ENCODE measurements at regions of chr1 and their contacts with region 1.

Region 1: DNA sequence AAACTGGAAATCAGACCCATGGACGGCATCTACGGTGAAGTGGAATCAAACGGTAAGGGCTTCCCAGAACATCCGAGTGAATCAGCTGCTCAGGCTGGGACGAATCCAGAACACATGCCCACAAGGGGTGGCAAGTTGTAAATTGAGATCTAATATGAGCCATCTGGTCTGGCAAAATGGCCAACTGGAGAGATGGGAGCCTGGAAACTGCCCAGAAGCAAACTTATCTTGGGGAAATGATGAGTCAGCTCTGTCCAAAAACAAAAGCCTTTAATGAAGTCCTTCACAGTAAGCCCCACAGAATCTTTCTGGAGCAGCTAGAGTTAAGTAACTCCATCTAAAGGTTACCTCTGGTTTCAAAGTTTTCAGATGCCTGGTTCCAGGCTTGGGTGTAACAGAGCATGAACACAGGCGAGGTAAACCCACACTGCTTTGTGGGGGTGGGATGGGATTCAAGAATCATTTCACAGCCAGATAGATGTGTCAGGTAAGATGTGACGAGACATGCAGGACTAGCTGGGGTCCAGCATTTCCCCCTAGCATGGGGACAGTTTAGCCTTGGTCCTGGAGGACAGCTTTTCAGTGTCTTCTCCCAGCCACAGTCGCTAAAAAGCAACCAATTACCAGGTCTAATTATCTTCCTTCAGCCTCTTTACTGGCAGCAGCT is 10.5 kb upstream of the SRP9 start:
- H3K4me3 ChIP-seq: no peak overlapping the region
- H3K27ac ChIP-seq: peak overlapping the region; percentile 29; the same call in 1 of the 2 replicates
- H3K4me1 ChIP-seq: peaks cover 37% of the 10 kb centered on the region
- CTCF ChIP-seq: no peak

Region 2: DNA sequence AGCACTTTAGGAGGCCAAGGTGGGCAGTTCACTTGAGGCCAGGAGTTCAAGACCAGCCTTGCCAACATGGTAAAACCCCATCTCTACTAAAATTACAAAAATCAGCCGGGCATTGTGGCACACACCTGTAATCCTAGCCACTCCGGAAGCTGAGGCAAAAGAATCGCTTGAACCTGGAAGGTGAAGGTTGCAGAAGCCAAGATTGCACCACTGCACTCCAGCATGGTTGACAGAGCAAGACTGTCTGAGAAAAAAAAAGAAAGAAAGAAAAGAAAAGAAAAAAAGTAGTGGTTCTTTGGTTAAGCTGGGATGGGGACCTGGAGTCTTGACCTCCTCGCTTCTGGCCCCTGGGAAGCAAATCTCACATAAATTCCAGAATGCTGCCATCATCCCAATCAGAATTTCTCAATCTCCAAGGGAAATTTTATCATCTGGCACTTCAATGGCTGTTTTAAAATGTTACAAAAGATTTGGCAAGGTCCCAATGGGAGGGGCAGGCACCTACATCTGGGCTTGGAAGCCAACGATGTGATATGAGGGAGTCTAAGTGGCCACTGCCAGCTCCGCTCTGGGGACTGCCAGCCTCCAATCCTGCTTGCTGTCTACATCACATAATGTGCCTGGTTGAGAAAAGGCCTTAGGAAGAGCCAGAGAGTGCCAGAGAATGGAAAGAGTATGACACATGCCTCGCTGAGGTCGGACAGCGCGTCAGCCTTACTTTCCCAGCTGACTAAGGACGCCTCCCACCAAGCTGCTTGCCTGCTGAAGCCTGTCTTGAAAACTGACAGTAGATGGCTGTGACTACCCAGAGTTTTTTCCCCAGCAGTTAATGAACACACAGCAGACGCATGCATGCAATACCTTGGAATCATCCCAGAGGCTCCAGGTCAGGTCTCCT is 31.6 kb before region 1 on chr1:
- CTCF ChIA-PET with region 1: interaction called, 54 read pairs
- POLR2A ChIA-PET with region 1: interaction called, 17 read pairs
- H3K4me3 ChIP-seq: no peak overlapping the region
- H3K27ac ChIP-seq: no peak overlapping the region
- H3K4me1 ChIP-seq: peaks cover 17% of the 10 kb centered on the region
- CTCF ChIP-seq: 0 out of 2 replicates have a peak, but pooled peaks have one; percentile 16

Region 3: DNA sequence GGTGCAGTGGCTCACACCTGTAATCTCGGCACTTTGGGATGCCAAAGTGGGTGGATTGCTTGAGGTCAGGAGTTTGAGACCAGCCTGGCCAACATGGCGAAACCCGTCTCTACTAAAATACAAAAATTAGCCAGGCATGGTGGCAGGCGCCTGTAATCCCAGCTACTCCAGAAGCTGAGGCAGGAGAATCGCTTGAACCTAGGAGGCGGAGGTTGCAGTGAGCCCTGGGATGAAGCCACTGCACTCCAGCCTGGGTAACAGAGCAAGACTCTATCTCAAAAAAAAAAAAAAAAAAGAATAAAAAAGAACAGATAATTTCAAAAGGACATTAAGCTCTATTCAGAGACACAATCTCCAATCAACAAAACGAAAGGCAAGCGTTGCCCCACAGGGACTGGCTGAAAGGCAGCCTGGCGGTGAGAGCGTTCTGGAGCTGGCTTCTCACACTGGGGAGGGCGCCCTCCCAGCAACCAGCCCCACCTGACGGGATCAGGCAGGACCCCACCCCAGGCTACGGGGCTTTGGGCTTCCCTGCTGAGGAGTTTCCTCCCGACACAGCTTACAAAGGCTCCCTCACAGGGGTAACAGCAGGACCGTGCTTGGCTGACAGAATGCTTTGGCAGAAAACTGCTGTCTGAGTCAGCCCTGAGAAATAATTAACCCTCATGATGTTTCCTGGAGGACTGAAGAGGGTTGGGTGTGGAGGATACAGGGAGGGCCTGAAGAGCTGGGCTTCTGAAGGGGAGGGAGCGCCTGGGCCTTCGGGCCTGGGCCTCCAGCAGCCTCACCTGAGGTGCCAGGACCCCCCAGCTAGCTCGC is 20.5 kb before region 1 on chr1:
- CTCF ChIA-PET with region 1: interaction called, 13 read pairs
- POLR2A ChIA-PET with region 1: interaction called, 20 read pairs
- H3K4me3 ChIP-seq: peak overlapping the region; percentile 3
- H3K27ac ChIP-seq: peak overlapping the region; percentile 35
- H3K4me1 ChIP-seq: no peaks in the 10 kb centered on the region
- CTCF ChIP-seq: peak; percentile 51; the same call in 1 of the 2 replicates

Measured in HEK293 (cell line).